GM18951 (cell line): ENCODE measurements at regions of chr15 and their contacts with region 1.

Region 1: DNA sequence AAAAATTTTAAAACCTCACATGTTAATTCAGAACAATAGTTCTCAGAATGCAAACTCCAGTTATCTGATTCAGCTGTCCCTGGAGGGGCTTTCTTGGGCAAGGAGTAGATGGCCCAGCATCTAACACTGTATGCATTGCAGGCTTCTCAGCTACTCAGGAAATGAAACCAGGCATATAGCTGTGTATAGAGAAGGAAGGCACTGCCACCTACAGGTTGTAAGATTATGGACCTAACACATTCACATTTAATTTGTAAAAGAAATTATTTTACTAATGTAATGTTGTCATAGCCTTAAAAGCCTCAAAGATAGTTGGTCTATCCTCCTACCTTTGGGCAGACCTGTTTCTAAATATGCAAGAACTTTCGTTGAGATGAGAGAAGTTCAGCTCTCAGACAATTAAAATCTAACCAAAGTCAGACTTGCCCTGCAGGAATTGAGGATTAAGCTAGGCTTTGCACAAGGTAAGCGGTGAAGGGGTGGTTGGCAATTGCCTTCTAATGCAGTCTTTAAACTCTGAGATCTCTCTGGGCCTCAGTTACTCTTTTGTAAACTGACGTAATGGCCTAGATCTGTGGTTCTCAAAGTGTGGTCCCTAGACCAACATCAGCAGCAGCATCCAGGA is 132.8 kb upstream of the SLC24A5 start:
- POLR2A ChIP-seq: no peak

Region 2: DNA sequence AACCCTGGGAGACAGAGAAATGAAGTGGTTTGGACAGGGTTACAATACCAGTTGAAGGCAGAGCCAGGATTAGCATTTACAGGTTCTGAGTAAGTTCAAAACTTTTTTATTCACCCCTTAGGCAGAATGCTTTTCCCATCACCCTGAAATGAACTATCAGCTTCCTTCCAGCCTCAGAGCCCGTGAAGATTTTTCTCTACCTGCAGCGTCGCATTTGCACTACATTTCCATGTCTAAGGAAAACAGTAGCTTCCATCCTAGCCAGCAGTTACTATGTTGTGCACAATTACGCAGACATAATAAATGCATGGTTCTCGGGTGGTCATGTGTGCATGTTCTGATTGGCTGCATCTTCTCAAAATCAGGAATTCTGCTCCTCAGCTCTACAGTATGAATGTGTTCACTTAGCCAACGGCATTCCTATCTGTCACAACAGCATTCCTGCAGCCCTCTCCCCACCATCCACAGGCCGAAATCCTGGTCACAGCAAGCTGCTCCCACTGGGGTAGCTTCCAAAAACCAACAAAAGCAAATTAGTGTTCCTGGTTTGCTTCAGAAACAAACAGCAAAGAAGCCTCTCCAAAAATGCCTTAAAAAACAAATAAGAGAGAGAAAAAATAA is 781.6 kb before region 1 on chr15:
- in situ Hi-C with region 1: loop called (anchors 25 kb)
- POLR2A ChIP-seq: no peak

Region 3: DNA sequence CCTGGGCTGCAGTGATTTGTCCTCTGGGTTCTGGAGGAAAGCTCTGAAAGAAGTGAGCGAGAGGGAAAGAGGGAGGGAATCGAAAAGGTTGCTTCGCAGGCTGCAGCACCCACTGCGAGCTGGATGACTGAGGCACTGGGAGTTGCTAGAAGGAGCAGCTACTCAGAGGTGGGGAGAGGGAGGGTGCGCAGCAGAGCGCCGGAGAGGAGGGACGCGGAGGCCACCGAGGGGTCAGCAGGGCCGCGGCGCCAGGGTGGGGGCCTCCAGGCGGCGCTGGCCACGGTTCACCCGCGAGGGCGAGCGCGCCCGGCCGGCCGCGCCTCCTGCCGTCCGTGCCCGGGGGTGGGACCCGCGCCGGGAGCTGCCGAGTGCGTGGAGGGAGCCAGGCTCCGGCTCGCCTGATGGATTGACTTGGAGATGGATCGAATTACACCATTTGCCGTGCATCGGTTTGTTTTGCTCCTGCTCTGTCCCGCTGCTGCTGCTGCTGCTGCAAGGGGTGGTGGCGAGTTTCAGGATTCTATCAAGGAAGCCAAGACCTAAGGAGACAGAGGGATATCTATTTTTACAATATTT is 270.9 kb before region 1 on chr15 and contains the start of gene SEMA6D:
- in situ Hi-C with region 1: loop called (anchors 25 kb)
- POLR2A ChIP-seq: no peak

Region 4: GRCh38 chr15:48153526-48153925 is 165.5 kb after region 1 on chr15:
- in situ Hi-C with region 1: no loop called
- POLR2A ChIP-seq: no peak